Ovary (tissue), 10 donors: ENCODE measurements at regions of chr1 and their contacts with region 1.

Region 1: DNA sequence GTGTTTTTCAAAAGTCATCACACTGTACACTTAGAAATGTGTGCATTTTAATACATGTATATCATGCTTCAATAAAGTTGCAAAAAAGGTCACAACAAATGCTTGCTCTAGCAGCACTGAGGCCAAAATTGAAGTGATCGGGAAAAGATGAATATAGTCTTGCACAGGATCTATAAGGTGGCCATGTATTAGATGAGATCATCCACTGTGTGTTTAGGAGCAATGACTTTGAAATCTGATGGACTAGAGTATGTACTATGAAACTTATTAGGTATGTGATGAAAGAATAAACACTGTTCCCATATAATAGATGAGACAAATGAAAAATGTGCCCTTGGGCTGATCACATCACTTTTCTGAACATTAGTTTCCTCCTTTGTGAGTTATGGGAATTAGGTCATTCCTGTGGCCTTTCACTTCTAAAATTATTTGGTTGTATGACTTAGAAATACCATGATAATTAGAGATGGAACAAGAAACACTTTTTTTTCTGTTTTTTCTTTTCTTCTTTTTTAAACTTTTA is 984.6 kb downstream of the ADGRL2 start:
- DNase-seq: no peak
- H3K4me3 ChIP-seq: no peak overlapping the region
- H3K27ac ChIP-seq: no peak overlapping the region
- H3K4me1 ChIP-seq: peaks cover 3% of the 10 kb centered on the region
- H3K27me3 ChIP-seq: no peaks in the 10 kb centered on the region
- CTCF ChIP-seq: no peak
- EP300 ChIP-seq: no peak
- POLR2A ChIP-seq: no peak

Region 2: GRCh38 chr1:82441402-82441801 is 343.9 kb before region 1 on chr1:
- intact Hi-C with region 1: loop called in 1 of 4 experiments (anchors 10 kb)
- DNase-seq: no peak
- H3K4me3 ChIP-seq: no peak overlapping the region
- H3K27ac ChIP-seq: no peak overlapping the region
- H3K4me1 ChIP-seq: peaks cover 1% of the 10 kb centered on the region
- H3K27me3 ChIP-seq: no peaks in the 10 kb centered on the region
- CTCF ChIP-seq: no peak
- EP300 ChIP-seq: no peak
- POLR2A ChIP-seq: no peak

Region 3: DNA sequence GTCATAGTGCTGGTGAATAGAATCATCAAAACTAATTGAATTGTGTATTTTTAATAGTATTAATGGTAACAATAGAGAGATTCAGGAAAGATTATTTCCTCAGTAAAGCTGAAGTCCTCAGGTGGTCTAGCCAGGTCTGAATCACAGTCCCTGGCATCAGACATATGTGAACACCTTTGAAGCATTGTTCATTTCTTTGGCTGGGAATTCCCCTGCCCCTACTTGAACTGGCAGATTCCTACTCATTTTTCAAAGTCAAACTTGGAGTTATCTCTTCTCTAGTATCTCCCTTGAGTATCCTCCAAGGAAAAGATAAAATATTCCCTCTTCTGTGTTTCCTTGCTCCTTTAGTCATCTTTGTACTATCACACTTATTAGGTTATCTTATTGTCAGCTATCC is 224.8 kb before region 1 on chr1:
- intact Hi-C with region 1: no loop called
- DNase-seq: no peak
- H3K4me3 ChIP-seq: no peak overlapping the region
- H3K27ac ChIP-seq: no peak overlapping the region
- H3K4me1 ChIP-seq: peaks cover 4% of the 10 kb centered on the region
- H3K27me3 ChIP-seq: no peaks in the 10 kb centered on the region
- CTCF ChIP-seq: no peak
- EP300 ChIP-seq: no peak
- POLR2A ChIP-seq: no peak

Region 4: GRCh38 chr1:82722608-82723007 is 62.7 kb before region 1 on chr1:
- intact Hi-C with region 1: no loop called
- DNase-seq: no peak
- H3K4me3 ChIP-seq: no peak overlapping the region
- H3K27ac ChIP-seq: no peak overlapping the region
- H3K4me1 ChIP-seq: no peaks in the 10 kb centered on the region
- H3K27me3 ChIP-seq: no peaks in the 10 kb centered on the region
- CTCF ChIP-seq: no peak
- EP300 ChIP-seq: no peak
- POLR2A ChIP-seq: no peak